Activated CD8-positive, alpha-beta memory T cell treated with anti-CD3 and anti-CD28 coated beads, Interleukin-2, amount 10 ng/mL, durations not matched to agents 7 days and 5 days (primary cell): ENCODE measurements at regions of chr3 and their contacts with region 1.

Region 1: GRCh38 chr3:141360888-141361598 is 7.3 kb upstream of the ZBTB38 start:
- DNase-seq: no peak
- ATAC-seq: peak; percentile 84
- H3K4me3 Mint-ChIP-seq: peak overlapping the region; percentile 63
- H3K27ac Mint-ChIP-seq: peak overlapping the region; percentile 75
- H3K4me1 Mint-ChIP-seq: peaks cover 11% of the 10 kb centered on the region
- H3K27me3 Mint-ChIP-seq: peaks cover 3% of the 10 kb centered on the region

Region 2: GRCh38 chr3:141212555-141212954 is 148.5 kb before region 1 on chr3:
- CTCF ChIA-PET with region 1: no interaction called
- DNase-seq: no peak
- ATAC-seq: no peak
- H3K4me3 Mint-ChIP-seq: no peak overlapping the region
- H3K27ac Mint-ChIP-seq: no peak overlapping the region
- H3K4me1 Mint-ChIP-seq: no peaks in the 10 kb centered on the region
- H3K27me3 Mint-ChIP-seq: peaks cover 5% of the 10 kb centered on the region

Region 3: GRCh38 chr3:141288336-141288990 is 72.6 kb before region 1 on chr3:
- CTCF ChIA-PET with region 1: no interaction called
- DNase-seq: peak; percentile 37
- ATAC-seq: no peak
- H3K4me3 Mint-ChIP-seq: no peak overlapping the region
- H3K27ac Mint-ChIP-seq: no peak overlapping the region
- H3K4me1 Mint-ChIP-seq: peaks cover 10% of the 10 kb centered on the region
- H3K27me3 Mint-ChIP-seq: no peaks in the 10 kb centered on the region

Region 4: DNA sequence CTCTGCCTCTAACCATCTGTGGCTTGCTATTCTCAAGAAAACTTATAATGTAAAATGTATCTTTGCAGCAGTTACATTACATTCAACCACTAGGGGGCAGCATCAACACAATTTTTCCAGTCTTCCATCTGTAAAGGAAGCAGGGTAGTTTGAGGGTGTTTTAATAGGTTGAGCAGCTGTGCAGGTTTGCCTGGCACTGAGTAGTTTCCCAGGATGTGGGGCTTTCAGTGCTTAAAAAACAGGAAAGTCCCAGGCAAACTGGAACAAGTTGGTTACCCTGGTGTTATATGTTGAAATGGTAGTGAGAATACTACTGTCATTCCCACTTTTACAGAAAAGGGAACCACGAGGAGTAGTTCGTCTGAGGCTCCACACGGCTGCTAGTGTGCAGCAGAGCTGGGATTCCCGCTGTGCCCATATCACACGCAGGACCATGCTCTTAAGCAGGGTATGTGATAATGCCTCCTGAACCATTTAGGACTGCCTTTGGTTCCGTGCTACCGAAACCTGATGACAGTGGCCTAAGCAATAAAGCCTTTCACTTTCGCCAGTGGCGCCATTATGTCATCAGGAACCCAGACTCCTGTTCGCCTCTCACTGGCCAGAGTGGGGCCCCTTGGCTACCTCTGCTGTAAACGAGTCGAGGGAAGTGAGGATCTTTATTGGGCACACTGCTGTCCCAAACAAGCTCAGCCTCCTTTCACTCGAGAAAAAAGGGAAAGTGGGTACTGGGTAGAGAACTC is 57.4 kb before region 1 on chr3:
- CTCF ChIA-PET with region 1: interaction called, 12 read pairs
- DNase-seq: peak; percentile 73
- ATAC-seq: peak; percentile 73
- H3K4me3 Mint-ChIP-seq: no peak overlapping the region
- H3K27ac Mint-ChIP-seq: no peak overlapping the region
- H3K4me1 Mint-ChIP-seq: peaks cover 23% of the 10 kb centered on the region
- H3K27me3 Mint-ChIP-seq: no peaks in the 10 kb centered on the region

Region 5: GRCh38 chr3:141379250-141379966 is 18.4 kb after region 1 on chr3:
- CTCF ChIA-PET with region 1: interaction called, 16 read pairs
- DNase-seq: peak; percentile 80
- ATAC-seq: peak; percentile 84
- H3K4me3 Mint-ChIP-seq: peak overlapping the region; percentile 60
- H3K27ac Mint-ChIP-seq: peak overlapping the region; percentile 98
- H3K4me1 Mint-ChIP-seq: peaks cover 71% of the 10 kb centered on the region
- H3K27me3 Mint-ChIP-seq: no peaks in the 10 kb centered on the region

Region 6: DNA sequence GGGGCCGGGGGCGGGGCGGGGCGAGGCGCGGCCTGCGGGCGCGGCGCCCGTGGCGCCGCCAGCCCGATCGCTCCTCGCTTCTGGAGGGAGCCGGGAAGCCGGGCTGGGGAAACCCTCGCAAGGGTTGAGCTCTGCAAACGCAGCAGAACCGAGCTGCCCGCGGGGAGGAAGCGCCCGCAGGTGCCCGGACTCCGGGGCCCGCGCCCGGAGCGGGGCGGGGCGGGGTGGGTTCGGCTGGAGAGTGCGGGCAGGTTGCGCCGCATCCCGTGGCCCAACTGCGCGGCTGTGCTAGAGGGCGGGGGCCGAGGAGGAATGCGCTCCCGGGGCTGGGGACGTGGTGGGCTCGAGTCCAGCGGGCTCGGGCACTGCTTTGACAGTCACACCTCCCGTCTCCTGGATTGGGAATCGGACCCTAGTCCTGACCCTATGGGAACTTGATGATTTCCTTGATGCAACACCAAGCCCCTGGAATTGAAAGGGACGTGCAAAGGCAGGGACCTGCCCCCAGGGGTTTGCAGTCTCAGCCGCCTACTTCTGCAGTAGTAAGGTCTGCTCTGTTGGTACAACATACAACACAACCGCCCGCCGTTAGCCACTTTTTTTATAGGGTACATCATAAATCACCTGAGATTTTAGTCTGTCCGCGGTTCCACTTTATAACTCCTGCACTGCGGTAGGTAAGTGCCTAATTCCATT is 41.6 kb after region 1 on chr3:
- CTCF ChIA-PET with region 1: interaction called, 11 read pairs
- DNase-seq: peak; percentile 69
- ATAC-seq: peak; percentile 72
- H3K4me3 Mint-ChIP-seq: peak overlapping the region; percentile 87
- H3K27ac Mint-ChIP-seq: peak overlapping the region; percentile 89
- H3K4me1 Mint-ChIP-seq: peaks cover 63% of the 10 kb centered on the region
- H3K27me3 Mint-ChIP-seq: no peaks in the 10 kb centered on the region

Region 7: DNA sequence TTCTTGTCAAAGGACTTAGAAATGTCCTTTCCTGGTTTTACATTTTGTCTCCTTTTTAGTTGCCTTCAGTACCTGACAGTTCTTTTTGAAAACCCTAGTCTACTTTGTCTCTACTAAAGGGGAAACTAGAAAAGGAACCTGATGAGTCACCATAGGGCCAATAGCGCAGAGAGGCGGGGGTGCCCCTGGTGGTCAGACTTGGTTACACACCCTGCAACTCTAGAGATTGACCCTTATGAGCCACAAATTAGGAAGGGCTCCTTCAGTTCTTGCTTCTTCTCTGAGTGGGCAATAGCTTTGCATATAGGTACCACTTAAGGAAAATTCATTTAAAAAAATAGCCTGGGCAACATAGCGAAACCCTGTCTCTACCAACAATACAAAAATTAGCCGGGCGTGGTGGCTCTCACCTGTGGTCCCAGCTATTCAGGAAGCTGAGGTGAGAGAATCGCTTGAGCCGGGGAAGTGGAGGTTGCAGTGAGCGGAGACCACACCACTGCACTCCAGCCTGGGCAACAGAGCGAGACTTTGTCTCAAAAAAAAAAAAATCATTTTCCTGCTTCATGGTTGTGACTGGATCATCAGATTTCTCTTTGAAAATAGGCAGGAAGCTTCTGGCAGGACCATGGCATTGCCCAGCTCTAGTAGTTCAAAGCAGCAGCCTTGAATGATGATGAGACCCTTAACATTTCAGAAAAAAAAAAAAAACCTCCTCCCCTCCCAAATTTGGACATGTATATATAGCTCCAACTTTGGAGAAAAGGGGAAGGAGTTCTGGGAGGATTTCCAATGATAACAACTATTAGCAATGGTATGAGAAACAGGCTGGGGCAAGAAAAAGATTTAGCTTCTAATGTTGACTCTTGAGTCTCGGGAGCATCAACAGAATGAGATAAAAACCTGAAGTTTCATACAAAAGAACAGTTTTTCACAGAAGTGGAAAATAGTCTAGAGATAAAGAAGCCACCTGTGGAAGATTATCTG is 80.6 kb after region 1 on chr3:
- CTCF ChIA-PET with region 1: interaction called, 88 read pairs
- DNase-seq: peak; percentile 90
- ATAC-seq: peak; percentile 100
- H3K4me3 Mint-ChIP-seq: peak overlapping the region; percentile 60
- H3K27ac Mint-ChIP-seq: peak overlapping the region; percentile 92
- H3K4me1 Mint-ChIP-seq: peaks cover 36% of the 10 kb centered on the region
- H3K27me3 Mint-ChIP-seq: no peaks in the 10 kb centered on the region

Region 8: GRCh38 chr3:141460097-141460704 is 99.2 kb after region 1 on chr3:
- CTCF ChIA-PET with region 1: interaction called, 140 read pairs
- DNase-seq: peak; percentile 93
- ATAC-seq: peak; percentile 99
- H3K4me3 Mint-ChIP-seq: no peak overlapping the region
- H3K27ac Mint-ChIP-seq: no peak overlapping the region
- H3K4me1 Mint-ChIP-seq: peaks cover 20% of the 10 kb centered on the region
- H3K27me3 Mint-ChIP-seq: no peaks in the 10 kb centered on the region